Activated naive CD4-positive, alpha-beta T cell treated with anti-CD3 and anti-CD28 coated beads for 36 hours (primary cell): ENCODE measurements at regions of chr15 and their contacts with region 1.

Region 1: GRCh38 chr15:101251830-101252820 is at the start of gene CHSY1:
- DNase-seq: peak; percentile 79
- H3K4me3 Mint-ChIP-seq: peak within 1 kb of the TSS; percentile 90
- H3K27ac Mint-ChIP-seq: peak within 1 kb of the TSS; percentile 88
- H3K4me1 Mint-ChIP-seq: peaks cover 60% of the 10 kb centered on the region
- H3K27me3 Mint-ChIP-seq: no peaks in the 10 kb centered on the region
- total RNA-seq, gene CHSY1: 19.5 to 21.8 TPM

Region 2: GRCh38 chr15:100602064-100602822 is 649.9 kb before region 1 on chr15 and contains the starts of genes ASB7 and LINS1:
- CTCF ChIA-PET with region 1: no interaction called
- intact Hi-C with region 1: loop called (anchors 2 kb)
- DNase-seq: peak; percentile 99
- H3K4me3 Mint-ChIP-seq: no peak within 1 kb of the TSS
- H3K27ac Mint-ChIP-seq: no peak within 1 kb of the TSS
- H3K4me1 Mint-ChIP-seq: peaks cover 56% of the 10 kb centered on the region
- H3K27me3 Mint-ChIP-seq: no peaks in the 10 kb centered on the region
- total RNA-seq, gene ASB7: 15.6 to 16.8 TPM
- total RNA-seq, gene LINS1: 36.8 to 37.1 TPM

Region 3: DNA sequence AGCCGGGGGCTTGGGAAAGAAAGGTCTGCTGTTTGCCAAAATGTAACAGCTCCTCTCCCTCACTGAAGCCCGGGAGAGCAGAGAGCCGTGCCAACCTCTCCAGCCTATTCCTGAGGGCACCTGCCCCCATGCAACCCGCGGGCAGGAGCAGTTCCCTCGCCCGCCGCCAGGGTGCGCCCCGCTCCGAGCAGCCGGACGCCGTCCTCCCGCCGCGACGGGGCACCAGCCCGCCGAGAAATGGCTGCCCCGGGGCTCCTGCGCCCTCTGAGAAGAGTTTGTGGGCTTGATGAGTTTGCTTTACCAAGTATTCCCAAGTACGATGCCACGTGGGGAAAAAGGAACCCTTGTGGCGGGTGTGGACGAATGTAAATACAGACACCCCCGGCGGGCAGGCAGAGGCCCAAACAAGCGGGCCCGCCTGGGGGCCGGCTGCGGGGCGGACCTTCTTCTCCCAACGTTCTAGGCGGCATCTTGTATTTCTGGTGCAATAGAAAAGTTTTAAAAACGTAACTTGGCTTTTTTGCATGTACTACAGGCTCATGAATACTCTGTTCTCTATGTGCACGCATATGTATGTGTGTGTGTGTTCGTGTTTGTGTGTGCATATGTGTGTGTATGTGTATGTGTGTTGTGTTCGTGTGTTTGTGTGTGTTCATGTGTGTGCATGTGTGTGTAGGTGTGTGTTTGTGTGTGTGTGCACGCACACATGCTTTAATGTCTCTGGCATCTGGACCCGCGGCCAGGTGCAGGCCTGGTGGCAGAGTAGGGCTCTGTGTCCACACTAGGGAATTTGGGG is 163.1 kb before region 1 on chr15:
- CTCF ChIA-PET with region 1: interaction called, 89 read pairs
- intact Hi-C with region 1: loop called (anchors 1 kb)
- DNase-seq: peak; percentile 83
- H3K4me3 Mint-ChIP-seq: no peak overlapping the region
- H3K27ac Mint-ChIP-seq: no peak overlapping the region
- H3K4me1 Mint-ChIP-seq: no peaks in the 10 kb centered on the region
- H3K27me3 Mint-ChIP-seq: no peaks in the 10 kb centered on the region

Region 4: GRCh38 chr15:101206176-101206591 is 45.9 kb before region 1 on chr15:
- CTCF ChIA-PET with region 1: interaction called, 5 read pairs
- intact Hi-C with region 1: loop called (anchors 1 kb)
- DNase-seq: peak; percentile 89
- H3K4me3 Mint-ChIP-seq: peak overlapping the region; percentile 72
- H3K27ac Mint-ChIP-seq: peak overlapping the region; percentile 92
- H3K4me1 Mint-ChIP-seq: peaks cover 83% of the 10 kb centered on the region
- H3K27me3 Mint-ChIP-seq: no peaks in the 10 kb centered on the region